ENCODE measurements at regions of chr10 and their contacts with region 1.

Region 1: GRCh38 chr10:89079961-89080360 is 89.4 kb downstream of the FAS start:
- DNase-seq: no peak
- H3K4me3 Mint-ChIP-seq: no peak overlapping the region
- H3K27ac Mint-ChIP-seq: no peak overlapping the region
- H3K4me1 Mint-ChIP-seq: peaks cover 22% of the 10 kb centered on the region
- H3K27me3 Mint-ChIP-seq: no peaks in the 10 kb centered on the region

Region 2: DNA sequence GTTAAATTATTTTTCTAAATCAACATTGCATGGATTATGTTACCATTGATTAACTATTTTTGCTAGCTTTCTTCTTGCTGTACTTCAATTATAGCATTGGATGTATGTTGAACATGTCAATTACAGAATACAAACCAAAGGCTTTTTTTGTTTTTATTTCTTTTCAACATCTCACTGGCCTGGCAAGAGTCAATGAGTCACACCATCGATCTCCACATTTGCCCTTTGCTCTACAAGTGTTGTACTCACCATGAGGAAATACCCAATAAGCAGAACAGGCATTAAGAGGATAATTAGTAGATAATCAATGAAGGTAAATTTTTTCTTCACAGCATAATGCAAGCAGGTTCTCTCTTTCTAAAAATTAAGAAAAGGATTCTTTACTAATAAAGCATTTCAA is 251.7 kb before region 1 on chr10:
- CTCF ChIA-PET with region 1: no interaction called
- POLR2A ChIA-PET with region 1: no interaction called
- intact Hi-C with region 1: loop called (anchors 5 kb)
- DNase-seq: no peak
- H3K4me3 Mint-ChIP-seq: no peak overlapping the region
- H3K27ac Mint-ChIP-seq: no peak overlapping the region
- H3K4me1 Mint-ChIP-seq: peaks cover 60% of the 10 kb centered on the region
- H3K27me3 Mint-ChIP-seq: no peaks in the 10 kb centered on the region

Region 3: DNA sequence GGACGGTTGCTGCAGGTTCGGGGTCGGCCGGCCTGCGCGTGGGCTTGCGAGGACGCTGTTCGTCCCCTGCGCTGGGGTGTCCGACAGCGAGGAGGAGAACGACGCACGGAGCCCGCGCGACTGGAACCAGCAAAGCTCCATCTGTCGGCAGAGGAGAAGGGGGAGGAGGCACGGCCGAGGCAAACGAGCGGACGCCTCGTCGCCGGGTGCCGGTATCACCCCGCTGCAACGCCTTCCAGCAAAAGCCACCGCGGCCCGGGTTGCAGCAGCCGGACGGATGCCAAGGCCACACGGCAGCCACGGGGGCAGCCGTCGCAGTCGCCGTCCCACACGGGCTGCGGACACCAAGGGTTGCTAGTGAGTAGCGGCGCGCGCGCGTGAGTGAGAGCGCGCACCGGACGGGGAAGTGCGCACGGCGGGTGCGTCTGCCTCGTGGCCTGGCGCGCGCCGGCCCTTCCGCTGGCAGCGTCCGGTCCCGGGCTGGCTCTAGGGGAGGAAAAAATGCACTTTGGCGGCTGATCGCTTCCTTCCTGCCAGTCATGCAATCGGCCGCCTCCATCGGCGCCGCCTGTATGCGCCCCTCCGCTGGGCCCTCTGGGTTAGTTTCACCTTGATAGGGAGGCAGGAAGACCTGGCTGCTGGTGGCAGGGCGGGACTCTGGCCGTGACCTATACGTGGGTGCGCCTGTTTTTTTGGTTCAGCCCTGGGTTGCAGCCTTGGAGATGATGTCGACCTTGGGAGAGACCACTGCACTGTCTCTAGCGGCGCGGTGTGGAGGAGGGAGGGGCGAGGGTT is 199.5 kb before region 1 on chr10:
- CTCF ChIA-PET with region 1: no interaction called
- POLR2A ChIA-PET with region 1: no interaction called
- intact Hi-C with region 1: no loop called
- DNase-seq: peak; percentile 86
- H3K4me3 Mint-ChIP-seq: peak overlapping the region; percentile 88
- H3K27ac Mint-ChIP-seq: peak overlapping the region; percentile 95
- H3K4me1 Mint-ChIP-seq: peaks cover 59% of the 10 kb centered on the region
- H3K27me3 Mint-ChIP-seq: no peaks in the 10 kb centered on the region

Region 4: GRCh38 chr10:88913127-88913526 is 166.8 kb before region 1 on chr10:
- CTCF ChIA-PET with region 1: no interaction called
- POLR2A ChIA-PET with region 1: no interaction called
- intact Hi-C with region 1: no loop called
- DNase-seq: no peak
- H3K4me3 Mint-ChIP-seq: no peak overlapping the region
- H3K27ac Mint-ChIP-seq: no peak overlapping the region
- H3K4me1 Mint-ChIP-seq: peaks cover 7% of the 10 kb centered on the region
- H3K27me3 Mint-ChIP-seq: no peaks in the 10 kb centered on the region

Region 5: GRCh38 chr10:88996927-88997326 is 83.0 kb before region 1 on chr10:
- CTCF ChIA-PET with region 1: no interaction called
- POLR2A ChIA-PET with region 1: no interaction called
- intact Hi-C with region 1: loop called (anchors 2 kb)
- DNase-seq: no peak
- H3K4me3 Mint-ChIP-seq: no peak overlapping the region
- H3K27ac Mint-ChIP-seq: peak overlapping the region; percentile 32
- H3K4me1 Mint-ChIP-seq: peaks cover 83% of the 10 kb centered on the region
- H3K27me3 Mint-ChIP-seq: no peaks in the 10 kb centered on the region

Region 6: DNA sequence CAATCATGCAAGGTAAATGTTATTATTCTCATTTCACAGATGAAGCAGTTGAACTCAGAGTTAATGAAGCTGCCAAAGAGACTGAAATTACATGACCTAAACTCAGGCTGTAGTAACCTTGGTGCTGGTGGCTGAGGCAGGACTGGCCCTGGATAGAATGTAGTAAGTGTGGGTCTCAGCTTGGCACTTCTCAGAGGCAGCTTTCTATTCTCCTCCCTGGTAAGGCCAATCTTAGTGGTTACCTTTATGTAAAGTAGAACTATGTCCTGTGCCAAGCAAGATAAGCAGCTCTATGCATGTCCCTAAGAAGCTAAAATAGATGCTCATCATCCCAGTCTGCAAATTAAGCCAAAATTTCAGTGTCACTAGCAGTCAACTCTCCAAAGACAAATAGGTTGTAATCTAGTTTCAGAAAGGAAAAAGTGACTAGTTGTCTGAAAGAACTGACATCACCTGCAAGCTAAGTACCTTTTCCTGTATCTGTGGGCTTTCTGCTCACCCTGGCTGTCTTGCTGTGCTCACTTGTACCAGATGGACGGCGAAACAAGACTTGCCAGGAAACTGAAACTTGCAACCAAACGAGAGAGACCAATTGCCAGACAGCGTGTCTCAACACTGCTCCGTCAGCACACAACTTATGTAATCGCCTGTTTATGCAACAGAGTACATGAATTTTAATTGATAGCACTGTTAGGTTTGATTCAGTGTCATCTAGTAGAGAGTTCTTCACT is 83.5 kb after region 1 on chr10:
- CTCF ChIA-PET with region 1: no interaction called
- POLR2A ChIA-PET with region 1: no interaction called
- intact Hi-C with region 1: loop called (anchors 1 kb)
- DNase-seq: peak; percentile 76
- H3K4me3 Mint-ChIP-seq: peak overlapping the region; percentile 10
- H3K27ac Mint-ChIP-seq: peak overlapping the region; percentile 35
- H3K4me1 Mint-ChIP-seq: peaks cover 42% of the 10 kb centered on the region
- H3K27me3 Mint-ChIP-seq: peaks cover 15% of the 10 kb centered on the region

Measured in activated CD4-positive, alpha-beta memory T cell treated with anti-CD3 and anti-CD28 coated beads for 36 hours (primary cell).